ENCODE measurements at regions of chr14 and their contacts with region 1.

Region 1: DNA sequence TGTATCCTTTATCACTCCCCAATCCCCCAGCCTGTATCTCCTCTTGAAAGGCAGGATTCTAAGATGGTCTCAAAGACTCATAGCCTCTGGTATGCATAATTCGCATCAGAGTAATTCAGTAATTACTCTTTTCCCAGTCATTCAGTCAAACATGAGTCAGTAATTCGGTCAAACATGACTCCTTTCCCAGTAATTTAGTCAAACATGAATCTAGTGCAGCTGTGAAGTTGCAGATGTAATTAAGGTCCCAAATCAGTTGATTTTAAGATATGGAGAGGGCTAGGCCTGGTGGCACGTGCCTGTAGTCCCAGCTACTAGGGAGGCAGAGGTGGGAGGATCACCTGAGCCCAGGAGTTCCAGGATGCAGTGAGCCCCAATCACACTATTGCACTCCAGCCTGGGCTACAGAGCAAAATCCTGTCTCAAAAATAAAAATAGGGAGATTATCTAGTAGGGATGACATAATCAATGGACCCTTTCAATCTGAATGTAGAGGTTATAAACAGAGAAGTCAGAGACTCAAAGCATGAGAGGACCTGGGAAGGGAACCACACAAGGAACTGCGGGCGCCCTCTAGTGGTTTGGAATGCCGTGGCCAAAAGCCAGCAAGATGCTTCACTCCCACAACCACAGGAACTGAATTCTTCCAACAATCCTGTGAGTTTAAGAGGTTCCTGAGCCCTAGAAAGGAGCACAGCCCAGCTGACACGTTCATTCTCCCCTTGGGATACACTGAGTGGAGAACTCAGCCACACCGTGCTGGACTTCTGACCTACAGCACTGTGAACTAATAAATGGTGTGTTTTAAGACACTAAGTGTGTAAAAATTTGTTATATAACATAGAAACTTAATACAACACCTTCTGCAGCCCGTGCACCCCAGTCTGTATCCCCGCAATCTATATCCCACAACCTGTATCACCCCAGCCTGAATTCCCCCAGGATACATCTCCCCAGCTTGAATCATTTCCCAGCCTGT is 14.3 kb upstream of the ARMH4 start:
- DNase-seq: no peak
- H3K4me3 ChIP-seq: no peak overlapping the region
- H3K27ac ChIP-seq: no peak overlapping the region
- H3K4me1 ChIP-seq: peaks cover 0 to 8% (median 0%) of the 10 kb centered on the region in 3 donors
- H3K27me3 ChIP-seq: no peaks in the 10 kb centered on the region
- CTCF ChIP-seq: peak; percentile 60 to 86 (median 68)
- POLR2A ChIP-seq: no peak

Region 2: GRCh38 chr14:58107947-58108552 is 58.2 kb before region 1 on chr14:
- intact Hi-C with region 1: loop called (anchors 5 kb)
- DNase-seq: no peak
- H3K4me3 ChIP-seq: no peak overlapping the region
- H3K27ac ChIP-seq: no peak overlapping the region
- H3K4me1 ChIP-seq: no peaks in the 10 kb centered on the region
- H3K27me3 ChIP-seq: no peaks in the 10 kb centered on the region
- CTCF ChIP-seq: peak; percentile 37 to 75 (median 66)
- POLR2A ChIP-seq: no peak

Region 3: GRCh38 chr14:58353516-58354299 is 187.4 kb after region 1 on chr14:
- intact Hi-C with region 1: no loop called
- DNase-seq: no peak
- H3K4me3 ChIP-seq: peak overlapping the region in 1 of 4 donors; percentile 37
- H3K27ac ChIP-seq: peak overlapping the region in 2 of 4 donors; percentile 9 to 36
- H3K4me1 ChIP-seq: peaks cover 0 to 14% (median 0%) of the 10 kb centered on the region in 3 donors
- H3K27me3 ChIP-seq: no peaks in the 10 kb centered on the region
- CTCF ChIP-seq: no peak
- POLR2A ChIP-seq: no peak